ENCODE measurements at regions of chr1 and their contacts with region 1.

Region 1: DNA sequence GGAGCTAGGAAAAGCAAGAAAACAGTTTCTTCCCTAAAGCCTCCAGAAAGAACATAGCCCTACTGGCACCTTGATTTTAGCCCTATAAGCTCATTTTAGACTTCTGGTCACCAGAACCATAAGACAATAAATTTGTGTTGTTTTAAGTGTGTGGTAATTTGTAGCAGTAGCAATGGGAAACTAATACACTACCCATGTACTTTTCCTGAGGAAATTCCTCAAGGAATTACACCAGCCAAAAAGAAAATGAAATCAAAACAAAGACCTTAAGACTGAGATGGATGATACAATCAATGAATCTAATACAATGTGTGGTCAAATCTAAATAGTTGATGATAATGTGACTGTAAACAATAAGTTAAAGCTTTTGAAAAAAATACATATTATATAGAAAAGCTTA is 11.8 kb downstream of the VAMP4 start:
- DNase-seq: no peak
- H3K4me3 ChIP-seq: no peak overlapping the region
- H3K27ac ChIP-seq: no peak overlapping the region
- H3K4me1 ChIP-seq: no peaks in the 10 kb centered on the region
- H3K27me3 ChIP-seq: no peaks in the 10 kb centered on the region
- CTCF ChIP-seq: no peak
- EP300 ChIP-seq: no peak
- POLR2A ChIP-seq: no peak
- RAD21 ChIP-seq: no peak

Region 2: GRCh38 chr1:171583581-171584201 is 146.4 kb before region 1 on chr1:
- CTCF ChIA-PET with region 1: no interaction called
- POLR2A ChIA-PET with region 1: no interaction called
- DNase-seq: no peak
- H3K4me3 ChIP-seq: no peak overlapping the region
- H3K27ac ChIP-seq: no peak overlapping the region
- H3K4me1 ChIP-seq: no peaks in the 10 kb centered on the region
- H3K27me3 ChIP-seq: no peaks in the 10 kb centered on the region
- CTCF ChIP-seq: no peak
- EP300 ChIP-seq: no peak
- POLR2A ChIP-seq: no peak
- RAD21 ChIP-seq: no peak

Region 3: DNA sequence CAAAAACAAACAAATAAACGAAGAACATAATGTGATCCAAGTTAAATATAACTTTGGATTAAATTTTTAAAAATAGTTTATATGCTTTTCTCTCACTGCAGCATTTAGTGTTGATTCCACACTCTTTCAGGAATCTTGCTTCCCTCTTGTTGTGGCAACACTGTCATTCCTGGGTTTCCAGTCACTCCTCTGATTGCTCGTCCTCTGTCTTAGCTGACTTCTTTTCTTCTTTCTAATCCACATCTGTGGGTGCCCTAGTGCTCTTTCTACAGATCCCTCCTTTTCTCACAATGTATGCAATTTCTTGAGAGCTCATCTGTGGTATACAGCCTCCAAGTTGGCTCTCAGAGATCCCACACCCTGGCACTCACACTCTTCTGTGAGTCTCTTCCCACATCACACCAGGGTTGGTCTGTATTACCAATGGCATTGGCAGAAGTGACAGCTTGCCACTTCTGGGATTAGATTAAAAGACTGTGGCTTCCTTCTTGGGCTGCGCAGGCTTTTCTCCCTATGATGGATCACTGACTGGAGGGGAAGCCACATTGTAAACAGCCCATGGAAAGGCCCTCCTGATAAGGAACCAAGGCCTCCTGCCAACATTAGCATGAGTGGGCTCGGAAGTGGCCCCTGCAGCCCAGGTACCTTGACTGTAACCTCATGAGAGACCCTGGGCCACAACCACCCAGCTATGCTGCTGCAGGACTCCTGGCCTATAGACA is 66.0 kb before region 1 on chr1:
- CTCF ChIA-PET with region 1: no interaction called
- POLR2A ChIA-PET with region 1: no interaction called
- DNase-seq: no peak
- H3K4me3 ChIP-seq: no peak overlapping the region
- H3K27ac ChIP-seq: no peak overlapping the region
- H3K4me1 ChIP-seq: no peaks in the 10 kb centered on the region
- H3K27me3 ChIP-seq: no peaks in the 10 kb centered on the region
- CTCF ChIP-seq: no peak
- EP300 ChIP-seq: no peak
- POLR2A ChIP-seq: no peak
- RAD21 ChIP-seq: no peak

Region 4: DNA sequence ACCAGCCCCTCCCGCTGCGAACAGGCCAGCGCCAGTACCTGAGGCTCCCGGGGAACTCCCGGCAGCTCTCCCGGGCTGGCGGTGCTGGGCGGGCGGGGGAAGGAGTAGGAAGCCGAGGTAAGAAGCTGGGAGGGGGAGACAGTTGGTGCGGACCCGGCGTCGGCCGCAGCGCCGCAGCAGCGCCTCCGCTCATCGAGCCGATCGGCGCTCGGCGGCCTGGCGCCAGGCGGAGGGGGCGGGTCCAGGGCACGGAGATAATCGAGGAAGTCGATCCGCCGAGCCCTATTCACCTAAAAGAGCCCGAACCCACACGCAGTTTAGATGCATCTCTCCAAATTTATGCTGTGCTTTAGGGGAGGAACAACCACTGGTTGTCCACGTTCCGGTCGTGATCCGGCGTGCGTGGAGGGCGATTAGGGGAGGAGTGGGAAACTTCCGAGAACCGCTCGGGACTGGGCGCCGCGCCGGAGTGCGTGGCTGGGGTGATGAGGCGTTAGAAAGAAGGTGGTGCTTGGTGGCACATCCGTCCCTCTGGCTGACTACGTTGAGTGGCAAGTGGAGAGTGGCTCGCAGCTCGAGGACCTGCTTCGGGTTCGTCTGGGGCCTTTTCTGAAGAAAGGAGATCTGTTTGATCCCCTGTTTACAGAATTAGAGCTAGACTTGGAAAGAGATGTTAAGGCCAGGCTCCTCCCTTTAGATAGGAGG is 12.0 kb after region 1 on chr1 and contains the start of gene VAMP4:
- CTCF ChIA-PET with region 1: interaction called, 3 read pairs
- POLR2A ChIA-PET with region 1: interaction called, 13 read pairs
- DNase-seq: peak; percentile 75 to 89
- H3K4me3 ChIP-seq: peak within 1 kb of the TSS; percentile 96 to 100 (median 98)
- H3K27ac ChIP-seq: peak within 1 kb of the TSS; percentile 55; the same call in 1 of the 2 replicates
- H3K4me1 ChIP-seq: peaks cover 0 to 6% (median 1%) of the 10 kb centered on the region in 4 experiments; a peak in 3 of 7 replicates
- H3K27me3 ChIP-seq: no peaks in the 10 kb centered on the region
- CTCF ChIP-seq: no peak
- EP300 ChIP-seq: peak in 1 of 2 experiments; percentile 88; a peak in 1 of 3 replicates
- POLR2A ChIP-seq: peak; percentile 53 to 70
- RAD21 ChIP-seq: peak in 1 of 2 experiments; percentile 24; a peak in 1 of 4 replicates
- total RNA-seq, gene VAMP4: 12.4 and 13.9 TPM in 2 replicates

Measured in H1 (cell line).